Prostate gland (tissue), 2 donors: ENCODE measurements at regions of chr6 and their contacts with region 1.

Region 1: DNA sequence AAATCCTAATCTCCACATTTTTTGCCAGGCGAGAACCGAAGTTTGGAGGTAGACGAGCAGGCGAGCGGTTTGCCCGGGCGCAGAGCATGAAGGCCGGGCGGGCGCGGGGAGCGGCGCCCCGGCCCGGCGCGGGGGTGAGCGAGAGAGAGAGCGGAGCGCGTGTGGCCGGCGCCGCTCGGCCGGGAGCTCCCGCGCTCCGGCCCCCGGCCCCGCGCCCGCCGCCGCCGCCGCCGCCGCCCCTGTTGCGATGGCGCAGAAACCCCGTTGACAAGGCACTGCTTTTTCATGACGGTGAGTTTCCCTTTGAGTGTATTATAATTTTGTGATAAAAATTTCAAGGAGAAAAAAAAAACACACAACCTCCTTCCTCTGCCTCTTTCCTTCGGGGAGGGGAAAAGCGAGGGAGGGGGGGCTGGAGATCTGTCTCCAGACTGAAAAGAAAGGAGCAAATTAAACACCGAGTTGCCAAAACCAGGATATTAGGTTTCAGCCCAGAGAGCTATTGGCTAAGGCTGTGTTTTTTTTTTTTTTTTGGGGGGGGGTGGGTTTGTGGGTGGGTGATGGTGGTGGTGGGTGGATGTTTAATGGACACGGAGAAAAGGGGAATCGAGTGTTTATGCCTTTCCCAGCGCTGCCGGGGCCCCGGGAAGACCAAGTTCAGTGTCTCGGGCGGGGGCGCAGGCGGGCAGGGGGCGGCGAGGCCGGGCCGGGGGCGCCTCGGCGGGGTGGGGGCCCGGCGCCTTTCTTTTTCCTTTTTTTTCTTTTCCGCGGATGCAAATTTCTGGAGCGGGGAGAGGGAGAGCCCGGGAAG is at the start of gene BICRAL:
- DNase-seq: peak; percentile 59
- H3K4me3 ChIP-seq: peak within 1 kb of the TSS; percentile 67 to 98
- H3K27ac ChIP-seq: peak within 1 kb of the TSS; percentile 98 to 100
- H3K4me1 ChIP-seq: no peaks in the 10 kb centered on the region
- H3K27me3 ChIP-seq: no peaks in the 10 kb centered on the region
- CTCF ChIP-seq: no peak
- POLR2A ChIP-seq: no peak
- total RNA-seq, gene BICRAL: 21.0 to 26.2 TPM

Region 2: DNA sequence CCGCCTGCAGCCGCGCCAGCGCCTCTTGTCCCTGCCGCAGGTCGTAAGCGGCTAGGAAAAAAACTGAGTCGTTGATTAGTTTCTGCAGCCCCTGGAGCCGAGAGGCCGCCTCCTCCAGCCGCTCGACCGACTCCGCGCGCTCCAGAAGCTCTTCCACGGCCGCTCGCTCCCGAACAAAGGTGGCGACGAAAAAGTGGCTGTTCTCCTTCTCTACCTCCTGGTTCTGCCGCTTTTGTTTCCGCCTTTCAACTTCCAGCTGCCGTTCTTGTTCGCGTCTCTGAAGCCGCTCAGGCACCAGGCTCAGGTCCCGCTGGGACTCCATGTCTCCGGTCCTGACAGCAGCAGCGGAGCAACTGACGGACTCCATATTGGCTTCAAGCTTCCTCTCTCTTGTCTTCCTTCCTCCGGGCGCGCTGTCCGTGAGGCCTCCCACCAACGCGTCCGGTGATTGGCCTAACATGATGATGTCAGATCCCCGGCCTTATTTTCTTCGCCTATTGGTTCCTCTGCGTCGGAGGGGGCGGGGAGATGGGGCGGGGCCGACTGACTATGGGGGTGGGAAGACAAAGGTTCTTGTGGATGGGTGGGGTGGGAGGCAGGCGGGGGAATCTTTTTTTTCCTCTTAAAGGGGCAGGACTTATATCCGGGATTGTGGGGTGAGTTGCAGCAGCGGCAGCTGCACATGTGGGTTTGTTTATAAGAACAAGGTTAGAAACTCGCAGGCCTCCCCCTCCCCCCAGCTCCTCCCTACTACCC is 36.1 kb before region 1 on chr6 and contains the start of gene TBCC:
- intact Hi-C with region 1: loop called (anchors 1 kb)
- DNase-seq: peak; percentile 99
- H3K4me3 ChIP-seq: peak within 1 kb of the TSS; percentile 51 to 81
- H3K27ac ChIP-seq: peak within 1 kb of the TSS; percentile 96 to 97
- H3K4me1 ChIP-seq: peaks cover 8% of the 10 kb centered on the region
- H3K27me3 ChIP-seq: no peaks in the 10 kb centered on the region
- CTCF ChIP-seq: no peak
- POLR2A ChIP-seq: peak; percentile 97
- total RNA-seq, gene TBCC: 43.4 to 59.8 TPM

Region 3: GRCh38 chr6:42996513-42996912 is 214.5 kb after region 1 on chr6:
- intact Hi-C with region 1: no loop called
- DNase-seq: no peak
- H3K4me3 ChIP-seq: no peak overlapping the region
- H3K27ac ChIP-seq: no peak overlapping the region
- H3K4me1 ChIP-seq: no peaks in the 10 kb centered on the region
- H3K27me3 ChIP-seq: no peaks in the 10 kb centered on the region
- CTCF ChIP-seq: no peak
- POLR2A ChIP-seq: no peak

Region 4: DNA sequence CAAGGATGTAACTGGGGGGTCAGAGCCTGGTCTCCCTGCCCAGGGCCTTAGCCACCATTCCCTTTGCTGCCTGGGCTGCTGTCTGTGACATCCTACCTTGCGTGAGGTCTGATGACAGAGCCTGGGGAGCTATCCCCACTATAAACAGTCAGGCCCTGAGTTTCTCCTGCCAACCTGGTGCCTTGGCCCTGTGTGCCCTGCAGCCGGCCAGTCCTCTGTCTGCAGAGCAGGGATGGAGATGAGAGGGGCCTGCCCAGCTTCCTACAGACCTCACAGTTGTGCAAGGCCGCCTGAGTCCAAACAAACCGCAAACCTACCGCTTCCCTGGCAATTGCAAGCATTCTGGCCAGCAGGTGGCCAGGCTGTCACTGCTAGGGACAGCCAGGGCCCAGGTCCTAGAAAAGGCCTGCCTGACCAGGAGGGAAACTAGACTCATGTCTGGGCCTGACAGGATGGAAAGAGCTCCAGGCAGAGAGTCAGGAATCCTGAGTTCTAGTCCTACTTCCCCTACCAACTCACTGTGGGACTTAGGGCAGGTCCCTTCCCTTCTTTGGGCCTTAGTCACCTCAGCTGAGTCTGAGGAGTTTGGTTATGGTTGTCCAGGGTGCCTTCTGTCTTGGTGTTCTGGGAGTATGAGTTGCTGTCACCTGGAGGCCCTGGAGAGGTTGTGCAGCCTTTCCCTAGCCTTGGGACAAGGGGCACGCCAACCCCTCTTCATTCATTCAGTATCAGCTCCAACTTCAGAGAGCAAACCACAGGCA is 1074.2 kb after region 1 on chr6:
- intact Hi-C with region 1: no loop called
- DNase-seq: no peak
- H3K4me3 ChIP-seq: no peak overlapping the region
- H3K27ac ChIP-seq: no peak overlapping the region
- H3K4me1 ChIP-seq: no peaks in the 10 kb centered on the region
- H3K27me3 ChIP-seq: no peaks in the 10 kb centered on the region
- CTCF ChIP-seq: peak in 1 of 4 experiments; percentile 30
- POLR2A ChIP-seq: no peak